A549 (cell line): ENCODE measurements at regions of chr2 and their contacts with region 1.

Region 1: GRCh38 chr2:218852911-218853667 is 6.5 kb upstream of the WNT6 start:
- DNase-seq: peak in 1 of 2 experiments; percentile 75
- ATAC-seq: peak; percentile 36 to 73; a peak in 4 of 6 replicates
- H3K4me3 ChIP-seq: no peak overlapping the region
- H3K27ac ChIP-seq: 0 out of 6 replicates have a peak overlapping the region, but pooled peaks of 1 of the 2 experiments have one; percentile 12
- H3K4me1 ChIP-seq: peaks cover 25% of the 10 kb centered on the region
- CTCF ChIP-seq: peak; percentile 83
- EP300 ChIP-seq: no peak
- POLR2A ChIP-seq: no peak
- RAD21 ChIP-seq: peak; percentile 82 to 88

Region 2: DNA sequence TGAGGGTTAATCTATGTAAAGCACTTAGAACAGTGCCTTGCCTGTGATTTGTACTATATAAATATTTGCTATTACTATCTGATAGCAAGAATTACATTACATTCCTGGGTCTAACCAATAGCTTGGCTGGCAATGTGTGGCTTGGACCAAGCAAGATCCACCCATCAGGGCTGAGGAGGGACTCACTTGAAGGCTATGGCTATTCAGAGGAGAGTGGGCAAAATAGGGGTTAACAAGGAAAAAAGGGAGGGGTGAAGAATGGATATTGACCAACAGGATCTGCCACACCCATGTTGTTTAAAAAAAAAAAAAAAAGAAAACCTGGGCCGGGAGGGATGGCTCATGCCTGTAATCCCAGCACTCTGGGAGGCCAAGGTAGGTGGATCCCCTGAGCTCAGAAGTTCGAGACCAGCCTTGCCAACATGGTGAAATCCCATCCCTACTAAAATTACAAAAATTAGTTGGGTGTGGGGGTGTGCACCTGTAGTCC is 540.8 kb before region 1 on chr2:
- CTCF ChIA-PET with region 1: no interaction called
- POLR2A ChIA-PET with region 1: no interaction called
- DNase-seq: peak in 1 of 2 experiments; percentile 63
- ATAC-seq: peak in 1 of 2 experiments; percentile 83; a peak in 3 of 6 replicates
- H3K4me3 ChIP-seq: no peak overlapping the region
- H3K27ac ChIP-seq: no peak overlapping the region
- H3K4me1 ChIP-seq: peaks cover 35% of the 10 kb centered on the region
- CTCF ChIP-seq: no peak
- EP300 ChIP-seq: no peak
- POLR2A ChIP-seq: no peak
- RAD21 ChIP-seq: no peak

Region 3: DNA sequence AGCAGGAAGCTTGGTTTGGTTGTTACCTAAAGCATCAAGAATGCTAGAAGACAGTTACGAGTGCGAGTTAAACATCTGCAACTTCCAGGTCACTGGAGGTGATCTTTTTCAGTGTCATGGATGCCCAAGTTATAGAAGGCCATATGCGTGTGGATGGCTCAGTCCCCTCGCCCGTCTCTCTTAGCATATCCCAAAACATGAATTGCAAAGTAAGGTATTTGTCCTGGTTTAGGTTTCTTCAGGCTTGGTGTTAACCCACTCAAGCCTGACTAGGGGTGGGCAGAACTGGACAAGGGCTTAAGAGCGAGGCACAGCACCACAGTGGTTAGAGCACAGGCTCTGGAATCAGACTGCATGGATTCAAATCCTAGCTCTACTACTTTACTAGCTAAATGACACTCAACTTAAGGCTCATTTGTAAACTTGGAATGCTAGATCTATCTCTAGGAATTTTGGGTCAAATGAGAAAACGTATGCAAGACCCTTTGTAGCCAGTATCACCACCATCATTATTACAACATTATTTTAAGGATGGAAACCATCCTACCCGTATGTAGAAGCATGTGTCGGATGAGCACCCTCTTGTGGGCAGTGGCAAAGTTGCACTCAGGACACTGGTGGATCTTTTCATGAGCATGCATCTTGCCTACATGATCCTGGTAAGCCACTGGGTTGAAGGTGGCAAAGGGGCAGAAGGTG is 204.9 kb before region 1 on chr2:
- CTCF ChIA-PET with region 1: interaction called, 14 read pairs
- POLR2A ChIA-PET with region 1: no interaction called
- DNase-seq: peak; percentile 71 to 80
- ATAC-seq: peak; percentile 89 to 91
- H3K4me3 ChIP-seq: no peak overlapping the region
- H3K27ac ChIP-seq: no peak overlapping the region
- H3K4me1 ChIP-seq: peaks cover 14% of the 10 kb centered on the region; the same call in 1 of the 3 replicates
- CTCF ChIP-seq: peak; percentile 82
- EP300 ChIP-seq: no peak
- POLR2A ChIP-seq: no peak
- RAD21 ChIP-seq: peak; percentile 68 to 73

Region 4: DNA sequence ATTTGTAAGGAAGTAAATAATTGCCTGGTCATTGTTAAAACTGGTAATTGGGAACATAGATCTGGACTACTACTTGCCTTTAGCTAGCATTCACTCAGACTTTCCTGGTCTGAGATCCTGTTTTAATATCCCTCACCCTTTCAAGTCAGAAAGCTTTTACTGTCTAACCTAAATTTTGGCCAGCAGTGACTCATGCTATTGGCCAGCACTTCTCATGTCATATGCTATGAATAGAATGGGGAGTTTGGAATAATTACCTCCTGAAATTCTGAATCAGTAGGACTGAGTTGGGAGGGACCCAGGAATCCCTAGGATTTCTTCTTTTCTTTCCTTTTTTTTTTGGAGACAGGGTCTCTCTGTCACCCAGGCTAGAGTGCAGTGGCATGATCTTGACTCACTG is 161.9 kb before region 1 on chr2:
- CTCF ChIA-PET with region 1: interaction called, 24 read pairs
- POLR2A ChIA-PET with region 1: no interaction called
- DNase-seq: no peak
- ATAC-seq: no peak
- H3K4me3 ChIP-seq: no peak overlapping the region
- H3K27ac ChIP-seq: no peak overlapping the region
- H3K4me1 ChIP-seq: no peaks in the 10 kb centered on the region
- CTCF ChIP-seq: no peak
- EP300 ChIP-seq: no peak
- POLR2A ChIP-seq: no peak
- RAD21 ChIP-seq: no peak

Region 5: DNA sequence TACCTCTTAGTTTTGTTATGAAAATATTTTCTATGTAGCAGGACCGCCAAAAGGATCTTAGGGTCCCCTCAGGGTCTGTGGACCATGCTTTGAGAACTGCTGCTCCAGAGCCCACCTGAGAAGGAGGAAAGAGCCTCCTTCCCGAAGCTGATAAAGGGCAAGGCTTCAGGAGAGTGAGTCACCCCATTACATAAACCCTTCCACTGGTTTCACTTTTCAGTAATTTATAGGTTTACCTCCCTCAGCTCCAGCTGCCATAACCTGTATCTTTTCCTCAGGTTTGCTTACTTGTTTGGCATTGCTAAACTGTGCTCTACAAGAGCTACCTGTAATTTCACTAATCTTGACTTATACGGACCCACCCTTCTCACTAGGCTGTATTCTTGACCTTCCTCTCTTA is 135.8 kb before region 1 on chr2:
- CTCF ChIA-PET with region 1: interaction called, 15 read pairs
- POLR2A ChIA-PET with region 1: no interaction called
- DNase-seq: no peak
- ATAC-seq: peak; percentile 50 to 59; a peak in 3 of 6 replicates
- H3K4me3 ChIP-seq: no peak overlapping the region
- H3K27ac ChIP-seq: 0 out of 6 replicates have a peak overlapping the region, but pooled peaks of 1 of the 2 experiments have one; percentile 38
- H3K4me1 ChIP-seq: peaks cover 21% of the 10 kb centered on the region; the same call in 2 of the 3 replicates
- CTCF ChIP-seq: no peak
- EP300 ChIP-seq: no peak
- POLR2A ChIP-seq: no peak
- RAD21 ChIP-seq: no peak

Region 6: GRCh38 chr2:218811382-218811781 is 41.7 kb before region 1 on chr2:
- CTCF ChIA-PET with region 1: interaction called, 16 read pairs
- POLR2A ChIA-PET with region 1: no interaction called
- DNase-seq: no peak
- ATAC-seq: no peak
- H3K4me3 ChIP-seq: no peak overlapping the region
- H3K27ac ChIP-seq: no peak overlapping the region
- H3K4me1 ChIP-seq: peaks cover 3% of the 10 kb centered on the region; the same call in 1 of the 3 replicates
- CTCF ChIP-seq: no peak
- EP300 ChIP-seq: no peak
- POLR2A ChIP-seq: no peak
- RAD21 ChIP-seq: no peak

Region 7: DNA sequence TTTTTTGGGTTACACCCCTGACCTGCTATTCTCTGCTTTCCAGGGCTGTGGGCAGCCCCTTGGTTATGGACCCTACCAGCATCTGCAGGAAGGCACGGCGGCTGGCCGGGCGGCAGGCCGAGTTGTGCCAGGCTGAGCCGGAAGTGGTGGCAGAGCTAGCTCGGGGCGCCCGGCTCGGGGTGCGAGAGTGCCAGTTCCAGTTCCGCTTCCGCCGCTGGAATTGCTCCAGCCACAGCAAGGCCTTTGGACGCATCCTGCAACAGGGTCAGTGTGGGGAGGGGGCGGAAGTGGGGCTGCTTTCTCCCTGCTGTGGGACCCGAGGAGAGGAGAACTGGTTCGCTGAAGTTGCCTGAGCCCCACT is 17.9 kb after region 1 on chr2:
- CTCF ChIA-PET with region 1: interaction called, 70 read pairs
- POLR2A ChIA-PET with region 1: no interaction called
- DNase-seq: no peak
- ATAC-seq: no peak
- H3K4me3 ChIP-seq: no peak overlapping the region
- H3K27ac ChIP-seq: no peak overlapping the region
- H3K4me1 ChIP-seq: peaks cover 8% of the 10 kb centered on the region; the same call in 1 of the 3 replicates
- CTCF ChIP-seq: no peak
- EP300 ChIP-seq: no peak
- POLR2A ChIP-seq: no peak
- RAD21 ChIP-seq: no peak

Region 8: DNA sequence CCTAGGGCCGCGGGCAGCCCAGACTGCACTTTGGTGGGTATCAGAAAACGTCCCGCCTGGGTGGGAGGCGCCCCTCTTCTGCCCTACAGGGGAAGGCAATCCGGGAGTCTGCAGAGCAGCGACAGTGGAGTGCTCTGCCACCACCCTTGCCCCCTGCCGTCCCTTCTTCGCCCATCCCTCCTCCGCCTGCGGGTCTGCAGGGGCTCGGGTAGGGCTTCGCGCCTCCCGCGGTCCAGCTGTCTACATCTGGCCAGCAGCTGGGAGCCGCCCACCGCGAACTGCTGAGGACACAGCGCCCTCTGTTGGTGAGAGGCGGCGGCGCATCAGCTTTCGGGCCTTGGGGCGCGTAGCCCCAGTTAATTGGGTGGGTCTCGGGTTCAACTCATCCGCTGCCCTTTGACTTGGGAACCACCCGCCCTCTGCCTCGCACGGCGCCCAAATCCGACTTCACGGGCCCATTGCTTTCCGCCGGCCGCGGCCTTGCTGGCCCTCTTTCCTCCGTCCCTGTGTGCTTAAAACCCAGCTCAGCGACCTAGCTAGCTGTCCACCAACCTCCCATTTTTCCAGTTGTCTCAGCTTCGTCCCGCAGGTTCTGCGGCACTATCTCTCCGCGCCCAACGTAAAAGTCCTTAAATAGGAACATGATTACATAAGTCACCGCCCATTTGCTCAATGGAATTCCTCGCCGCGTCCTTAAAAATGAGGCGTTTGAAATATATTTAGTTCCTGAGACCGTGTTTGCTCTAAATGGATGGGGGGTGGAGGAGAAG is 45.2 kb after region 1 on chr2:
- CTCF ChIA-PET with region 1: interaction called, 47 read pairs
- POLR2A ChIA-PET with region 1: no interaction called
- DNase-seq: peak; percentile 54 to 71
- ATAC-seq: peak; percentile 67 to 86
- H3K4me3 ChIP-seq: peak overlapping the region; percentile 34
- H3K27ac ChIP-seq: peak overlapping the region in 1 of 2 experiments; percentile 52; a peak in 1 of 6 replicates
- H3K4me1 ChIP-seq: peaks cover 32% of the 10 kb centered on the region
- CTCF ChIP-seq: peak; percentile 92
- EP300 ChIP-seq: no peak
- POLR2A ChIP-seq: no peak
- RAD21 ChIP-seq: peak; percentile 79 to 86

Region 9: DNA sequence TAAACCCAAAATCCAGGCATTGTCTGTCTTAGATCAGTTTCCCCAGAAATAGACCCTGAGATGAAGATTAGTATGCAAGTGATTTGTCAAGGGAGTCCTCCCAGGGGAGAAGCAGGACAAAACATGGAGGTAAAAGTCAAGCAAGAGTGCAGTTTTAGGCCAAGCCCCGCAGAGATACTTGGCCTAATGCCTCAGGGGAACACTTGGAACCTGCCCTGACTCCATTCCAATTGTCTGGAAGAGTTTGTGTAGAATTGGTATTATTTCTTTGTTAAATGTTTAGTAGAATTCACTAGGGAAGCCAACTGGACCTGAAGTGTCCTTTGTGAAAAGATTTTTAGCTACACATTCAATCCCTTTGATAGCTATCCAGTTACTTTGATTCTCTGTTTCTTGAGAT is 61.9 kb after region 1 on chr2:
- CTCF ChIA-PET with region 1: no interaction called
- POLR2A ChIA-PET with region 1: no interaction called
- DNase-seq: no peak
- ATAC-seq: no peak
- H3K4me3 ChIP-seq: no peak overlapping the region
- H3K27ac ChIP-seq: no peak overlapping the region
- H3K4me1 ChIP-seq: no peaks in the 10 kb centered on the region
- CTCF ChIP-seq: no peak
- EP300 ChIP-seq: no peak
- POLR2A ChIP-seq: no peak
- RAD21 ChIP-seq: no peak

Region 10: GRCh38 chr2:219045937-219046550 is 193.0 kb after region 1 on chr2:
- CTCF ChIA-PET with region 1: no interaction called
- POLR2A ChIA-PET with region 1: no interaction called
- DNase-seq: no peak
- ATAC-seq: peak; percentile 60 to 64; a peak in 3 of 6 replicates
- H3K4me3 ChIP-seq: no peak overlapping the region
- H3K27ac ChIP-seq: no peak overlapping the region
- H3K4me1 ChIP-seq: peaks cover 3% of the 10 kb centered on the region; the same call in 1 of the 3 replicates
- CTCF ChIP-seq: no peak
- EP300 ChIP-seq: no peak
- POLR2A ChIP-seq: no peak
- RAD21 ChIP-seq: no peak